K562 (cell line): ENCODE measurements at regions of chr1 and their contacts with region 1.

Region 1: GRCh38 chr1:181033799-181034451 is at the start of gene MR1:
- DNase-seq: peak; percentile 87 to 91 (median 89)
- ATAC-seq: peak; percentile 93
- H3K4me3 ChIP-seq: peak within 1 kb of the TSS; percentile 42
- H3K27ac ChIP-seq: peak within 1 kb of the TSS; percentile 74
- H3K4me1 ChIP-seq: peaks cover 9 to 36% of the 10 kb centered on the region in 2 experiments; a peak in 4 of 5 replicates
- H3K27me3 ChIP-seq: no peaks in the 10 kb centered on the region
- CTCF ChIP-seq: no peak
- EP300 ChIP-seq: no peak
- POLR2A ChIP-seq: peak; percentile 84
- RAD21 ChIP-seq: no peak
- polyA plus RNA-seq, gene MR1: 15.6 to 19.8 TPM

Region 2: GRCh38 chr1:180579961-180580611 is 453.8 kb before region 1 on chr1:
- CTCF ChIA-PET with region 1: no interaction called
- POLR2A ChIA-PET with region 1: no interaction called
- in situ Hi-C with region 1: no loop called
- intact Hi-C with region 1: no loop called
- DNase-seq: no peak
- ATAC-seq: no peak
- H3K4me3 ChIP-seq: no peak overlapping the region
- H3K27ac ChIP-seq: no peak overlapping the region
- H3K4me1 ChIP-seq: peaks cover 12 to 19% of the 10 kb centered on the region in 2 experiments
- H3K27me3 ChIP-seq: no peaks in the 10 kb centered on the region
- CTCF ChIP-seq: no peak
- EP300 ChIP-seq: no peak
- POLR2A ChIP-seq: no peak
- RAD21 ChIP-seq: no peak

Region 3: DNA sequence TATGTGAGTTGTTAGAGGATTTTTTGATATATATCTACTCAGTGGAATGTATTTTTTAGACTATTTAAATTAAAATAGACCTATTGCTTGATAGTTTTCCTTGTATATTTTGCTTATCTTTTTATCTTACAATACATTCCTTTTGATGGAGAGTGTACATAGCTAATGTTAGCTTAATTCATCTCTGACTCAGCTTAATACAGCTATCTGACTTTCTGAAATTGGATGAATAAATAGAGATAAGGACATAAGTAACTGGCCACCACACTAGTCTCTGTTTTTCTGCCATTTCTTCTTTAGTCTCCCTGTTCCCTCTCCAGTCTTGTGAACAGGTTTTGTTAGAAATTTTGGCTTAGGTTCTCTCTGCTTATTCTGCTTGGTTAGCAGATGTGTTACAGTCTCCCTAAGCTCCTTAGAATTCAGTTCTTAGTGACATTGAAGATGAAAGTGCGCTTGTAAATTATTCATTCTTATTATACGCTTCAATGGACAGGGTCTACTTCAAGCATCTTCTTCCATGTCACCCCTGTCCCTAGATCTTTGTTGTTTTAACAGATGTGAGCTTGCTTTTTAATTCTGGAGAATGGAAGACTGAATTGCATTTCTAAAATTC is 342.5 kb before region 1 on chr1:
- CTCF ChIA-PET with region 1: no interaction called
- POLR2A ChIA-PET with region 1: no interaction called
- in situ Hi-C with region 1: no loop called
- intact Hi-C with region 1: no loop called
- DNase-seq: no peak
- ATAC-seq: no peak
- H3K4me3 ChIP-seq: no peak overlapping the region
- H3K27ac ChIP-seq: no peak overlapping the region
- H3K4me1 ChIP-seq: no peaks in the 10 kb centered on the region
- H3K27me3 ChIP-seq: no peaks in the 10 kb centered on the region
- CTCF ChIP-seq: no peak
- EP300 ChIP-seq: no peak
- POLR2A ChIP-seq: no peak
- RAD21 ChIP-seq: no peak

Region 4: DNA sequence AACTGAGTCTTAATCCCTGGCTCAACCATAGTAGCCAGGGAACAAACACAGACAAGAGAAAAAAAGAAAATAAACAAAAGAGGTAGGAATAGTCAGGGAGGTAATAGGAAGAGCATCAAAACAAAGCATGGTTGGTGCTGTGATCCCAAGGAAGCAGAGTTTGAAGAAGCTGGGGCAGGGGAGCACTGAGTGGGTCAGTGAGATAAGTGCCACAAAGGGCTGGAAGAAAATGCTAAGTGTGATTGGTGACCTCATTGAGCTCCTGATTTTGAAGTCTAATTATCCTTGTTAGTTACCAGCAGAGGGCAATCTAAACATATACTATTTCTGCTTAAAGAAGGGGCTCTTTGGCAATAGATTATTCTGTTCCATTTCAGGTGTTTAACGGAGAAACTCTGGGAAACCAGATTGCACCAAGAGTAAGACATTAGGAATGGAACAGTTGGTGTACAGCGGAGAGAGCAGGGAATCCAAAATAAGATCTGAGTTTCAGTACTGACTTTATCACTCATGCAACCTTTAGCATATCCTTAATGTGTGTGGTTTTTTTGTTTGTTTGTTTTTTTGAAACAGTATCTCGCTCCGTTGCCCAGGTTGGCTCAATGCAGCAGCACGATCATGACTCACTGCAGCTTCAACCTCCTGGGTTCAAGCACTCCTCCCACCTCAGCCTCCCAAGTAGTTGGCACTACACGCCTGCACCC is 152.0 kb before region 1 on chr1:
- CTCF ChIA-PET with region 1: no interaction called
- POLR2A ChIA-PET with region 1: interaction called, 3 read pairs
- in situ Hi-C with region 1: no loop called
- intact Hi-C with region 1: loop called (anchors 1 kb)
- DNase-seq: peak; percentile 52 to 76 (median 68)
- ATAC-seq: peak; percentile 97
- H3K4me3 ChIP-seq: no peak overlapping the region
- H3K27ac ChIP-seq: no peak overlapping the region
- H3K4me1 ChIP-seq: peaks cover 0 to 3% of the 10 kb centered on the region in 2 experiments; a peak in 1 of 5 replicates
- H3K27me3 ChIP-seq: no peaks in the 10 kb centered on the region
- CTCF ChIP-seq: peak; percentile 45 to 80 (median 67); a peak in 5 of 6 replicates
- EP300 ChIP-seq: no peak
- POLR2A ChIP-seq: no peak
- RAD21 ChIP-seq: peak; percentile 85 to 91

Region 5: DNA sequence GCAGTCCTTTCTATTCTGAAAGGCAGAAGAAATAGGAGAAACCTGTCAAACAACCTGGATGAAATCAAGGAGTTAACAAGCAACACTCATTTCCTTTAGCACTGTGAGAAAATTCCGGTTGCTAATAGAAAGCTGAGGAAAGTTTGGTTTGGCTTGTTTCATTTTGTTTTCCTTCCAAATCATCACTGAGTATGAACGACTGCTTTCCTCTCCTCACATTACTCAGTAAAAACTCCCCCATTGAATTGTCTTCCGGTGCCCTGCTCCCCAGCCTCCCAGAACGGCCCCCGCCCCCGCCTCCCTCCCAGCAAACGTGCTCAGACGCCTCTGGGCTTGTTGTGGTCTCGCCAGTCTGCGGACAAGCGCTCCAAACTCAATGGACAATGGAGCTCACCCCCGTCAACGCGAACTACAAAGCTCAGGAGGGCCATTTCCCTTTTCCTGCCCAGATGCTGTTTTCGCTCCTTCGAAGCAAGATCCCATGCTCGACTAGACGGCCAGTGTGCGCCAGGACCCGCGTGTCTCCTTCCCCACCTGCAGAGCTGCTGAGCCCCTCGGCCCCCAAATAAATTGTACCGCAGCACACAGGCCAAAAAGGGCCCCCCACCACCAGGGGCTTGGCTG is 12.0 kb before region 1 on chr1:
- CTCF ChIA-PET with region 1: no interaction called
- POLR2A ChIA-PET with region 1: interaction called, 41 read pairs
- in situ Hi-C with region 1: no loop called
- intact Hi-C with region 1: no loop called
- DNase-seq: peak; percentile 65 to 91 (median 78)
- ATAC-seq: peak; percentile 84
- H3K4me3 ChIP-seq: peak overlapping the region; percentile 94
- H3K27ac ChIP-seq: peak overlapping the region; percentile 81
- H3K4me1 ChIP-seq: peaks cover 8 to 10% of the 10 kb centered on the region in 2 experiments; a peak in 3 of 5 replicates
- H3K27me3 ChIP-seq: no peaks in the 10 kb centered on the region; a peak in 1 of 5 replicates
- CTCF ChIP-seq: no peak
- EP300 ChIP-seq: no peak
- POLR2A ChIP-seq: 0 out of 2 replicates have a peak, but pooled peaks have one; percentile 69
- RAD21 ChIP-seq: no peak

Region 6: DNA sequence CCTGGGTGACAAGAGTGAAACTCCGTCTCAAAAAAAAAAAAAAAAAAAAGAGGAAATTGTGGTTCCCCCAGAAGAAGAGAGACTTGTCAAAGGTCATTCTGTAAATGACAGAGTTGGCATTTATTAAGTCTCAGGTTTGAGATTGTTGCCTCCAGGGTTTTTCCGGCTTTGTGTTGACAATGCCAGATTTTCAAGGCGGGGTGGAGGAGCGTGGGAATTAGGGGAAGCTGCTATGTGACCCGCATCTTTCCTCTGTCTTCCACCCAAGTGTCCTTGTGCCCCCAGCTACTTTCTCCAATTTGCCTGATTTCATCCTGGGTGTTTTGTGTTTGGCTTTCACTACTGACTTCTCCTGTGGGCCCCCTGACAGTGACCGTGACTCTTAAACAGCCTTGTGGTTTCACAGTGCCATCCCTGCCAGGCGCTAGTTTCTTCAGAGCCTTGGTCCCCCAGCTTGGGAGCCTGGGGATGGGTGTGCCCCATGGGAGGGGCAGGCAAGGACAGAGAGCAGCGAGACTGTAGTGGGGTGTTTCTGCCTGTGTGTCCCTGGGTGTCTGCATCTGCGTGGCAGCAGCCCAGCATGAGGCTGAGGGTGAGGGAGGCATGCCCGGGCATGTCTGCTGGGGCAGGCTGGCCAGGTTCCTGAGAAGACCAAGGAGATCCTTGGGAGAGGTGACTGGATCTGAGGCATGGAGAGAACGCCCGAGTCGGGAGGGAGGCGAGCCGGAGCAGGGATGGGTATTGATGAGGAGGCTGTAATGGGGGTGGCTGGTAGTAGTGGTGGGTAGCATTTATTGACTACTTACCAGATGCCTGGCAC is 100.8 kb after region 1 on chr1:
- CTCF ChIA-PET with region 1: no interaction called
- POLR2A ChIA-PET with region 1: interaction called, 3 read pairs
- in situ Hi-C with region 1: loop called (anchors 5 kb)
- intact Hi-C with region 1: no loop called
- DNase-seq: no peak
- ATAC-seq: no peak
- H3K4me3 ChIP-seq: no peak overlapping the region
- H3K27ac ChIP-seq: no peak overlapping the region
- H3K4me1 ChIP-seq: peaks cover 40 to 53% of the 10 kb centered on the region in 2 experiments
- H3K27me3 ChIP-seq: no peaks in the 10 kb centered on the region
- CTCF ChIP-seq: no peak
- EP300 ChIP-seq: no peak
- POLR2A ChIP-seq: no peak
- RAD21 ChIP-seq: no peak

Region 7: GRCh38 chr1:181142096-181142958 is 108.4 kb after region 1 on chr1:
- CTCF ChIA-PET with region 1: interaction called, 16 read pairs
- POLR2A ChIA-PET with region 1: no interaction called
- in situ Hi-C with region 1: loop called (anchors 5 kb)
- intact Hi-C with region 1: loop called (anchors 1 kb)
- DNase-seq: peak; percentile 90 to 94 (median 94)
- ATAC-seq: peak; percentile 98
- H3K4me3 ChIP-seq: no peak overlapping the region
- H3K27ac ChIP-seq: peak overlapping the region; percentile 36; the same call in 1 of the 3 replicates
- H3K4me1 ChIP-seq: peaks cover 20 to 28% of the 10 kb centered on the region in 2 experiments
- H3K27me3 ChIP-seq: no peaks in the 10 kb centered on the region
- CTCF ChIP-seq: peak; percentile 98 to 100 (median 99)
- EP300 ChIP-seq: peak; percentile 46; the same call in 1 of the 2 replicates
- POLR2A ChIP-seq: no peak
- RAD21 ChIP-seq: peak; percentile 100

Region 8: GRCh38 chr1:181251001-181251712 is 217.2 kb after region 1 on chr1:
- CTCF ChIA-PET with region 1: no interaction called
- POLR2A ChIA-PET with region 1: no interaction called
- in situ Hi-C with region 1: no loop called
- intact Hi-C with region 1: no loop called
- DNase-seq: no peak
- ATAC-seq: no peak
- H3K4me3 ChIP-seq: no peak overlapping the region
- H3K27ac ChIP-seq: no peak overlapping the region
- H3K4me1 ChIP-seq: no peaks in the 10 kb centered on the region
- H3K27me3 ChIP-seq: no peaks in the 10 kb centered on the region; a peak in 1 of 5 replicates
- CTCF ChIP-seq: no peak
- EP300 ChIP-seq: no peak
- POLR2A ChIP-seq: no peak
- RAD21 ChIP-seq: no peak

Region 9: GRCh38 chr1:181335629-181336028 is 301.7 kb after region 1 on chr1:
- CTCF ChIA-PET with region 1: no interaction called
- POLR2A ChIA-PET with region 1: no interaction called
- in situ Hi-C with region 1: no loop called
- intact Hi-C with region 1: no loop called
- DNase-seq: no peak
- ATAC-seq: no peak
- H3K4me3 ChIP-seq: no peak overlapping the region
- H3K27ac ChIP-seq: no peak overlapping the region
- H3K4me1 ChIP-seq: no peaks in the 10 kb centered on the region
- H3K27me3 ChIP-seq: no peaks in the 10 kb centered on the region
- CTCF ChIP-seq: no peak
- EP300 ChIP-seq: no peak
- POLR2A ChIP-seq: no peak
- RAD21 ChIP-seq: no peak